IMR-90 (cell line): ENCODE measurements at regions of chr2 and their contacts with region 1.

Region 1: DNA sequence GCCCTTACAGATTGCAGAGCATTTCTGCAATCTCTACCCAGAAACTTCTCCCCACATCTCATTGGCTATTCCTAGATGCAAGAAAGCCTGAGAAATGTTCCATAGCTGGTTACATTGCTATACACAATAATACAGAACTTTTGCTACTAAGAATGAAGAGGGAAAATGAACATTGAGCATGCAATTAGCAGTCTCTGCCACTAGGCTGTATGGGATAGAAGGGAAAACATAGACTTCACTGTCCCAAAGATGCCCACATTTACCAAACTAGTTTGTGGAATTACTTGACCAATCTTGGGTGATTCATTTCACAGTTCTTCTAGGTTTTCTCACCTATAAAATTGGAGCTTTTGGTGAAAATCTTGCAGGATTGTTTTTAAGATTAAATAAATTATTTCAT is 265.7 kb upstream of the NT5C1B start:
- DNase-seq: peak; percentile 22
- ATAC-seq: no peak; the same call in 1 of the 2 replicates
- H3K4me3 ChIP-seq: no peak overlapping the region
- H3K27ac ChIP-seq: no peak overlapping the region
- H3K4me1 ChIP-seq: no peaks in the 10 kb centered on the region
- H3K27me3 ChIP-seq: no peaks in the 10 kb centered on the region
- CTCF ChIP-seq: peak; percentile 44
- POLR2A ChIP-seq: no peak
- RAD21 ChIP-seq: peak; percentile 52

Region 2: GRCh38 chr2:18871430-18871829 is 16.4 kb after region 1 on chr2:
- CTCF ChIA-PET with region 1: no interaction called
- POLR2A ChIA-PET with region 1: interaction called, 4 read pairs
- dilution Hi-C with region 1: no loop called
- in situ Hi-C with region 1: no loop called
- intact Hi-C with region 1: loop called (anchors 1 kb)
- DNase-seq: no peak
- ATAC-seq: no peak
- H3K4me3 ChIP-seq: no peak overlapping the region
- H3K27ac ChIP-seq: no peak overlapping the region
- H3K4me1 ChIP-seq: no peaks in the 10 kb centered on the region
- H3K27me3 ChIP-seq: no peaks in the 10 kb centered on the region
- CTCF ChIP-seq: no peak
- POLR2A ChIP-seq: no peak
- RAD21 ChIP-seq: no peak